Dorsolateral prefrontal cortex (tissue), 120 donors: ENCODE measurements at regions of chr4 and their contacts with region 1.

Region 1: DNA sequence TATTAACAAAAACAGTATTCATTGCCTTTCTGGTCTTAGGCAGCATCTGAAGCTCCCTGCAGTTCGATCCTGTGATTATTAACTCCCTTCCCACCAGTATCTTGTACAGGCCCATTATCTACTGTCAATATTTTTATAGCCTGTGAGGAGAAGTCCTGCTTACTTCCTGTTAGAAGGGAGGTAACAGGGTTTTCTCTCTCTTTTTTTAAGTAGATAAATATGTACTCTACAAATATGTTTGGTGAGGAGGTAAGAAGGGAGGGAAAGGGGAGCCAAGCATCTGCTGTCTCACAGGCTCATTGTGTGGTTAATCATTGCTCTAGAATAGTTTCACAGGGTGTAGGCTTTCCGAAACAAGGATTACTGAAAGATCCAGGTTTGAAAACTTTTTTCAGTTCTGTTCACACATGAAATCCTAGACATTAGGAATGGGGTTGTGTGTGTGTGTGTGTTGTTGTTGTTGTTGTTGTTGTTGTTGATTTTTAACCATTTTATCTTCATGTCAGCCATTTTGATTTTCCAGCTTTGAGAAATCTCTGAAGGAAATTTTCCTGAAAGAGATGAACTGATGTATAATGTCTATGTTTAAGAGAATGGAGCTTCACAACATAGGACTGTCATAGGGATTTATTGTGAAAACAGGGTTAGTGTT is 14.2 kb downstream of the ATOH1 start:
- DNase-seq: no peak
- H3K4me3 ChIP-seq: no peak overlapping the region
- H3K27ac ChIP-seq: no peak overlapping the region
- H3K27me3 ChIP-seq: peaks cover 0 to 45% (median 4%) of the 10 kb centered on the region in 45 donors
- CTCF ChIP-seq: no peak

Region 2: DNA sequence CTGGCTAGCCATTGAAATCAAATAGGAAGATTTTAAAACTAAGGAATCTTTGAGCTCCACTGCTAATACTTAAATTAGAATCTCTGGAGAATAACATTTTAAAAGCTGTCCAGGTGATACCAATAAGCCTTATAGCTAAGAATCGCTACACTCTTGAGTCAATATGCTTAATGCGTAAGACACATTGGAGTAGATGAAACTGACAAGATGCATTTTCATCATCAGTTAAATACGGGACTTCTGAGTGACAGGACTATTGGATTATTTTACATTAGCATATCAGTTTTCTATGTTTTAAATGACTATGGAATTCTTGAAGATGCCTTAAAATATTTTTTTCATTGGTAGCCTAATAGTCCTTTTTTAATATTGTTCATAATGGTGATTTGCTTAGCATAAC is 66.1 kb after region 1 on chr4:
- intact Hi-C with region 1: loop called in 1 of 2 experiments (anchors 10 kb)
- DNase-seq: no peak
- H3K4me3 ChIP-seq: no peak overlapping the region
- H3K27ac ChIP-seq: no peak overlapping the region
- H3K27me3 ChIP-seq: no peaks in the 10 kb centered on the region
- CTCF ChIP-seq: no peak

Region 3: GRCh38 chr4:93918856-93919255 is 76.1 kb after region 1 on chr4:
- intact Hi-C with region 1: no loop called
- DNase-seq: no peak
- H3K4me3 ChIP-seq: no peak overlapping the region
- H3K27ac ChIP-seq: no peak overlapping the region
- H3K27me3 ChIP-seq: no peaks in the 10 kb centered on the region
- CTCF ChIP-seq: no peak